Naive thymus-derived CD8-positive, alpha-beta T cell (primary cell): ENCODE measurements at regions of chr20 and their contacts with region 1.

Region 1: GRCh38 chr20:45010399-45010828 is 44.1 kb downstream of the STK4 start:
- DNase-seq: no peak
- ATAC-seq: peak; percentile 14 to 24
- H3K4me3 Mint-ChIP-seq: peak overlapping the region in 1 of 10 donors; percentile 4
- H3K27ac Mint-ChIP-seq: peak overlapping the region in 7 of 10 donors; percentile 1 to 70 (median 54)
- H3K4me1 Mint-ChIP-seq: peaks cover 25 to 67% (median 63%) of the 10 kb centered on the region in 4 donors
- H3K27me3 Mint-ChIP-seq: no peaks in the 10 kb centered on the region

Region 2: GRCh38 chr20:45052698-45053429 is 42.5 kb after region 1 on chr20:
- POLR2A ChIA-PET with region 1: interaction called, 10 read pairs
- DNase-seq: peak in 4 of 10 donors; percentile 9 to 40 (median 27)
- ATAC-seq: peak; percentile 75 to 83
- H3K4me3 Mint-ChIP-seq: peak overlapping the region; percentile 6 to 65 (median 48)
- H3K27ac Mint-ChIP-seq: peak overlapping the region; percentile 41 to 84 (median 76)
- H3K4me1 Mint-ChIP-seq: peaks cover 49 to 92% (median 83%) of the 10 kb centered on the region in 4 donors
- H3K27me3 Mint-ChIP-seq: no peaks in the 10 kb centered on the region